Activated naive CD8-positive, alpha-beta T cell treated with anti-CD3 and anti-CD28 coated beads, Interleukin-2, amount 10 ng/mL, durations not matched to agents 7 days and 5 days (primary cell): ENCODE measurements at regions of chr7 and their contacts with region 1.

Region 1: DNA sequence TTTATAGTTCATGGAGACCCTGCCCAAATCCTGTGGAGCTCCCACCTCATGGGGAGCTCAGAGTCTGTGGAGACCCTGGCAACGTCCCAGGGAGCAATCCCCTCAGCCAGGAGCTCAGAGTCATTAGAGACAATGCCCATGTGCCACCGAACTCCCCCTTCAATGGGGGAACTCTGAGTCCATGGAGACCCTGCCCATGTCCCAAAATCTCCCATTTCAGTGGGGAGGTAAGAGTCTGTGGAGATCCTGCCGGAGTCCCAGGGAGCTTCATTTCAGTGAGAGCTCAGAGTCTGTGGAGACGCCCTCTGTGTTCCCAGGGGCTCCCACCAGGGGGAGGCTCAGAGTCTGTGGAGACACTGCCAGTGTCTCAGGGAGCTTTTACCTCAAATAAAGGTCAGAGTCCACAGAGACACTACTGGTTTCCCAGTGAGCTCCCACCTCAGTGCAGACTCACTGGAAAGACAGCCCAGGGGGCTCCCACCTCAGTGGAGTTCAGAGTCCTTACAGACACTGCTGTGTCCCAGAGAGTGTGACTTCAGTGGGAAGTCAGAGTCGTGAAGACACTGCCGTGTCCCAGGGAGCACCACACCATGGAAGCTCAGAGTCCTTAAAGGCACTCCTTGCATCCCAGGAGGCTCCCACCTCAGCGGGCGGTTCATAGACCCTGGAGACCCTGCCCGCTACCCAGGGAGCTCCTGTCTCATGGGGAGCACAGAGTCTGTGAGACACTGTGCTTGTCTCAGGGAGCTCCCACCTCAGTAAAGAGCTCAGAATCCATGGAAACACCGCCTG is 5.0 kb downstream of the MYO1G start:
- DNase-seq: peak; percentile 70
- ATAC-seq: peak; percentile 16
- H3K4me3 Mint-ChIP-seq: no peak overlapping the region
- H3K27ac Mint-ChIP-seq: peak overlapping the region; percentile 45
- H3K4me1 Mint-ChIP-seq: peaks cover 21% of the 10 kb centered on the region
- H3K27me3 Mint-ChIP-seq: no peaks in the 10 kb centered on the region

Region 2: DNA sequence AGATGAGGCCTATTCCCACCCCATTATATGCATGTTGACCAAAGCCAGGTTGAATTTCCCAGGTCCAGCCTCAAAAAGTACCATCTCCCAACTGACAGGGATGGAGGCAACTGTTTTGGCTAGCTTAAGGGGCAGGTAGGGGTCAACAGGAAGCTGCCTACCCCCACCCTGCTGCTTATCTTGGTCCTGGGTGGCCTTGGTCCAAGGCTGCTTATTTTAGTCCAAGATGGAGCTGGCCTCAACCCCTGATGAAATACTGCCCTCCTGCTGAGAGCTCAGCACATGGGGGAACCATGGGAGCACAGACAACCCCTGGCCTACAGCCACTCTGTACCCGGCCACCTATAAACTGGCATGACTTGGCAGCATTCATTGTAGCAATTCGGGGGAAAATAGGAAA is 18.1 kb before region 1 on chr7:
- POLR2A ChIA-PET with region 1: interaction called, 76 read pairs
- DNase-seq: no peak
- ATAC-seq: no peak
- H3K4me3 Mint-ChIP-seq: no peak overlapping the region
- H3K27ac Mint-ChIP-seq: no peak overlapping the region
- H3K4me1 Mint-ChIP-seq: peaks cover 18% of the 10 kb centered on the region
- H3K27me3 Mint-ChIP-seq: peaks cover 25% of the 10 kb centered on the region

Region 3: GRCh38 chr7:44962483-44963251 is 11.1 kb before region 1 on chr7:
- POLR2A ChIA-PET with region 1: interaction called, 76 read pairs
- DNase-seq: peak; percentile 35
- ATAC-seq: no peak
- H3K4me3 Mint-ChIP-seq: no peak overlapping the region
- H3K27ac Mint-ChIP-seq: no peak overlapping the region
- H3K4me1 Mint-ChIP-seq: peaks cover 22% of the 10 kb centered on the region
- H3K27me3 Mint-ChIP-seq: no peaks in the 10 kb centered on the region

Region 4: GRCh38 chr7:44986218-44987053 is 12.6 kb after region 1 on chr7:
- POLR2A ChIA-PET with region 1: interaction called, 22 read pairs
- DNase-seq: peak; percentile 99
- ATAC-seq: peak; percentile 95
- H3K4me3 Mint-ChIP-seq: peak overlapping the region; percentile 98
- H3K27ac Mint-ChIP-seq: peak overlapping the region; percentile 98
- H3K4me1 Mint-ChIP-seq: peaks cover 44% of the 10 kb centered on the region
- H3K27me3 Mint-ChIP-seq: no peaks in the 10 kb centered on the region

Region 5: DNA sequence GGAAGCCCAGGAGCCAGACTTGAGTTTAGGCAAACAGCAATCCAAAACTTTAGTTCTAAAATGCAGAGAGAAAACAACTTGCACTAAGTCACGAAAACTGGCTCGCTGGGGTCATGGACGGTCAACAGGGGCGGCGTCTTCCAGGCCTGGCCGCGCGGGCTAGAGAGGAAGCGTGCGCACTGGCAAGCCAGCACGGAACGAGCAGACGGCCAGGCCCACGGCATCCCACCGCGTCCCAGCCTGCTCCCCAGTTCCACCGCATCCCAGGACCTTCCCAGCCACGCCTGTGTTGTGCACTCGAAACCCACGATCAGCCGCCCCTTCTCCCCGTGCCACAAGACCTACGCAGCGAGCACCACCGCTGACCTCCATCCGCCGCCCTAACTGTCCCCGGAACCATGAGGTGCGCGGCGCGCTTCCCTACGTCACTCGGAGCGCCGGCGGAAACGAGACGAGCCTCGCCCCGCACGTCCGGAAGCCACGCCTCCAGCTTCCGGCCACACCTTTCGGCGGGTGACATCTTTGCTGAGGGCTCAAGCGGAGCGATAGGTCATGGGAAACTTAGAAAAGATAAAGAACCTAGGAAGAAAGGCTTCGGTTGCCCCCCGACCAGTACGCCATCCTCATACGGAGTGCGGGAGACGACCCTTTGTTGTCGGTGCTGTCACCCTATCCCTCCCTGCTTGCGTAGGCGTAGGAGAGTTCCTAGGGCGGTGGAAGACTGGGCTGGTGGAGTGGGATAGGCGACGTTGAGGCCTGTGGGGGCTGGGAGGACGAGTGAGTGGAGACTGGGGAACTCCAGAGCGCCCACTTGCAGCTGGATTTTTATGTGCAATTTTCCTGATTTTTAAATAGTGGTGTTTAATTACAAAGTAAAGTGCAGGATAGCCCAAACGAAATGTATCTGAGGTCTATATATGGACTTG is 137.8 kb after region 1 on chr7 and contains the start of gene TBRG4:
- POLR2A ChIA-PET with region 1: interaction called, 36 read pairs
- DNase-seq: peak; percentile 97
- ATAC-seq: peak; percentile 86
- H3K4me3 Mint-ChIP-seq: peak within 1 kb of the TSS; percentile 97
- H3K27ac Mint-ChIP-seq: peak within 1 kb of the TSS; percentile 94
- H3K4me1 Mint-ChIP-seq: peaks cover 35% of the 10 kb centered on the region
- H3K27me3 Mint-ChIP-seq: peaks cover 10% of the 10 kb centered on the region
- total RNA-seq, gene TBRG4: 123 to 127 TPM

Region 6: GRCh38 chr7:45122975-45123860 is 149.4 kb after region 1 on chr7:
- POLR2A ChIA-PET with region 1: no interaction called
- DNase-seq: no peak
- ATAC-seq: peak; percentile 67
- H3K4me3 Mint-ChIP-seq: peak overlapping the region; percentile 39
- H3K27ac Mint-ChIP-seq: peak overlapping the region; percentile 91
- H3K4me1 Mint-ChIP-seq: peaks cover 17% of the 10 kb centered on the region
- H3K27me3 Mint-ChIP-seq: no peaks in the 10 kb centered on the region